ENCODE measurements at regions of chr6 and their contacts with region 1.

Region 1: DNA sequence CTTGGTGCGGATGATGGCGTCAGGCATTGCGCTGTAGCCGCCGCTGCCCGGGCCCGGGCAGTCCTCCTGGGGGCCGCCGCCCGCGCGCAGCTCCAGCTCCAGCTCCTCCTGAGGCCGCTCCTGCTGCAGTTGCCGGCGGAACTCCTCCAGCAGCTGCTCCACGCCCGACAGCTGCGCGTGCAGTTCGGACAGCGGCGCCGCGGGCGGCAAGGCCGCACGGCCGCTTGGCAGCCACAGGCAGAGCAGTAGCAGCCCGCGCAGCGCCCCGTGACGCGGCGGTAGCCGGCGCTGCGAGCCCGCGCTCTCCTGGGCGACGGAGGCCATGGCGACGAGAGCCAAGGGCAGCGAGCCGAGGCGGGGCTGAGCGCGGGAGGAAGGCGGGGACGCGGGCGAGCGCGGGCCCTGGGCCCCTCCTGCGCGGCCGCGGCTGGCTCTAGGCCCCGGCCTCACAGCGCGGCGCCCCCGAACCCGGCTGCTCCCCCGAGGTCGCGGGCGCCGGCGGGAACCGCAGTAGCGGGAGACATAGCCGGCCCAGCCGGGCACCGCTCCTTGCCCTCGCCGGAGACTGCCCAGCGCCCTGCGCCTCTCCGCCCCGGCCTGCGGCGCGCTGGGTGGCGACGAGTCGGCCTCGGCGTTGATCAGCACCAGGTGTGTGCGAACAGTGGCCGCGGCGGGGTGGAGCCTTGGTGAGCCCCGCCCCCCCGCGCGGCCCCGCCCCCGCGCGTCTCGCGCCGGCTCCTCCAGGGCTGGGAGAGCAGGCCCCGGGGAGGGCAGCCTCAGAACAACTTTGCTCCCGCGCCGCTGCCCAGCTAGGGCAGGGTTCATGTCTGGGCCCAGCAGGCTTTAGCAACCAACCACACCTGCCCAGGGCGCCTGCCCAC is at the start of gene LRP11:
- DNase-seq: peak; percentile 88
- H3K4me3 Mint-ChIP-seq: peak within 1 kb of the TSS; percentile 81
- H3K27ac Mint-ChIP-seq: no peak within 1 kb of the TSS
- H3K4me1 Mint-ChIP-seq: peaks cover 19% of the 10 kb centered on the region
- H3K27me3 Mint-ChIP-seq: peaks cover 2% of the 10 kb centered on the region
- total RNA-seq, gene LRP11: 6.7 to 7.2 TPM

Region 2: GRCh38 chr6:149648148-149649145 is 215.5 kb before region 1 on chr6 and contains the start of gene KATNA1:
- CTCF ChIA-PET with region 1: no interaction called
- POLR2A ChIA-PET with region 1: no interaction called
- intact Hi-C with region 1: loop called (anchors 5 kb)
- DNase-seq: peak; percentile 94
- H3K4me3 Mint-ChIP-seq: peak within 1 kb of the TSS; percentile 79
- H3K27ac Mint-ChIP-seq: peak within 1 kb of the TSS; percentile 81
- H3K4me1 Mint-ChIP-seq: peaks cover 22% of the 10 kb centered on the region
- H3K27me3 Mint-ChIP-seq: no peaks in the 10 kb centered on the region
- total RNA-seq, gene KATNA1: 22.3 to 22.8 TPM

Region 3: DNA sequence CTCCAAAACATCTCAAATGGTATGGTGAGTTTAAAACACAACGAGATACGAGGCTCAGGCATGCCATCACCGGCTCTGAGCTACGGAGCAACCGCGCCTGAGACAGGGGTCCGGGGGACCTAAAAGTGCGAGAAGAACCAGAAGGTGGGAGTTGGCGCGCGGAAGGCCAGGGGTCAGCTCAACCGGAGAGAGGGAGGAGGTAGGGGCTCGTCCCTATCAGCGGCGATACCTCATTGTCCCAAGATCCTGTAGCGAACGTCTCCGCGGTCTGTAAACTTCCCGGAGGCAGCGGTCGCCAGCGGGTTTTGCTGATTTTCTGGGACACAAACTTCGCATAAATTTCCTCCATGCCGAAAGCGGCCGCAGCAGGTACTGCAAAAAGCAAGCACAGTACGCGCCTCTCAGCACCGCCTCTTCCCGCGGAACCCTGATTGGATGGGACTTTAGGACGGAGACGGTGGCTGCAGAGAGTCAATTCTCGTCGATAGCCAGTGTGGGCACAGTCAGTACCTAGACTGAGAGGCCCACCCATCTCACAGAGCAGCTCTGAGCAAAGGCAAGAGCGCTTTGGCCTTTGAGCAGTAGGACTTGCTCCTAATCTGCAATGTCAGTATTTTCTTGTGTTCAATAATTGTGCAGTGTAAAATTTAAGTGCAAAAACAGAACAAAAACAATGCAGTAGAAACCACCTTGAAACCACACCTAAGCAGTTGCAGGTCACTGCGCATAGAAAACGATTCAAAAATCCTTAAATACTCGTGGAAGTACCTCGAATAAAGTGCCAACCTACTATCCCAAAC is 117.6 kb before region 1 on chr6 and contains the start of gene NUP43:
- CTCF ChIA-PET with region 1: no interaction called
- POLR2A ChIA-PET with region 1: no interaction called
- intact Hi-C with region 1: loop called (anchors 10 kb)
- DNase-seq: peak; percentile 97
- H3K4me3 Mint-ChIP-seq: peak within 1 kb of the TSS; percentile 98
- H3K27ac Mint-ChIP-seq: peak within 1 kb of the TSS; percentile 85
- H3K4me1 Mint-ChIP-seq: peaks cover 28% of the 10 kb centered on the region
- H3K27me3 Mint-ChIP-seq: no peaks in the 10 kb centered on the region
- total RNA-seq, gene NUP43: 64.3 to 69.8 TPM

Region 4: DNA sequence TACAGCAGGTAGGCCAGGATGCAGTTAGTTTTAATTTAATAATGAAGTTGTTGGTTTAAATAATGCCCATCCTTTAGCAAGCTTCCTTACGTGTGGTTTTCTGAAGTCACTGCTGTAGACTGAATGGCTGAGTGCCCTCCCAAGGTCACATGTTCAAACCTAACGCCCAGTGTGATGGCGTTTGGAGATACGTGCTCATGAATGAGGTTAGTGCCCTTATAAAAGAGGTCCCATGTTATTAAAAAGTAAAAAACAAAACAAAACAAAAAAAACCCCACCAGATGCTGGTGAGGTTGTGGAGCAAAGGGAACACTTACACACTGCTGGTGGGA is 16.0 kb before region 1 on chr6:
- CTCF ChIA-PET with region 1: interaction called, 5 read pairs
- POLR2A ChIA-PET with region 1: no interaction called
- intact Hi-C with region 1: loop called (anchors 1 kb)
- DNase-seq: no peak
- H3K4me3 Mint-ChIP-seq: no peak overlapping the region
- H3K27ac Mint-ChIP-seq: no peak overlapping the region
- H3K4me1 Mint-ChIP-seq: peaks cover 16% of the 10 kb centered on the region
- H3K27me3 Mint-ChIP-seq: peaks cover 1% of the 10 kb centered on the region

Region 5: GRCh38 chr6:149884215-149884614 is 20.3 kb after region 1 on chr6:
- CTCF ChIA-PET with region 1: no interaction called
- POLR2A ChIA-PET with region 1: no interaction called
- intact Hi-C with region 1: no loop called
- DNase-seq: no peak
- H3K4me3 Mint-ChIP-seq: no peak overlapping the region
- H3K27ac Mint-ChIP-seq: no peak overlapping the region
- H3K4me1 Mint-ChIP-seq: no peaks in the 10 kb centered on the region
- H3K27me3 Mint-ChIP-seq: peaks cover 17% of the 10 kb centered on the region

Measured in activated CD4-positive, alpha-beta memory T cell treated with anti-CD3 and anti-CD28 coated beads for 36 hours (primary cell).